AG04449 (cell line): ENCODE measurements at regions of chr13 and their contacts with region 1.

Region 1: GRCh38 chr13:60448907-60449510 is 52.0 kb downstream of the TDRD3 start:
- DNase-seq: peak; percentile 12
- H3K4me3 ChIP-seq: no peak overlapping the region
- CTCF ChIP-seq: peak; percentile 63

Region 2: GRCh38 chr13:60463787-60464186 is 14.8 kb after region 1 on chr13:
- CTCF ChIA-PET with region 1: interaction called, 26 read pairs
- POLR2A ChIA-PET with region 1: no interaction called
- DNase-seq: no peak
- H3K4me3 ChIP-seq: no peak overlapping the region
- CTCF ChIP-seq: no peak

Region 3: DNA sequence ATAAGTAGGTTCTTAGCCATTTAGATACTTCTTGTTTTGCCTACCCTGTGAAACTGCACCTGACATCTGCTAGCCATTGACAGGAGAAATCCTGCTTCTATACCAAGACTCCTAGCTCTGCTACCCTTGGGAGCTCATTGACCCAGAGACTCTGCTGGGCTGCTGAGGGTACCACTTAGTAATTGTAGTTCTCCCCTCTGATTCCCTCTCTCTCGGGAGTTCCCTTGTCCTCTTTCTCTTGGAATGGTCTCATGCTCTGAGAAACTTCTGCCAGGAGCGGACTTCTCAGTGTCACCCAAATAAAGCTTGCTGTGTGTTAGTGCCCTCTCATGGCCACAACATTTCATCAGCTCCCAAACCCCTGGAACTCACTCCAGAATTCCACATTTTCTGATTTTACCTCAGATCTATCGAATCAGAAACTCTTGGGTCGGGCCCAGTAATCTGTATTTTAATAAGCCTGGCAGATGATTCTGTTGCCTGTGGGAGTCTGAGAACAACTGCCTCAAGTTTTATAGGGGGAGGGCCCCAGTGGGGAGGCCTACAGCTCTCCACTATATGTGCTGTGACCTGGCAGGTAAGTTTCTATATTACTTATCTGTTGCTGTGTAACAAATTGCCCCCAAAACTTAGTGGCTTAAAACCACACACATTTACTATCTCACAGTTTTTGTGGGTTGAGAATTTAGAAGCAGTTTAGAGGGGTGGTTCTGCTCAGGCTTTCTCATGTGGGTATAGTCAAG is 169.2 kb after region 1 on chr13:
- CTCF ChIA-PET with region 1: interaction called, 50 read pairs
- POLR2A ChIA-PET with region 1: no interaction called
- DNase-seq: no peak
- H3K4me3 ChIP-seq: no peak overlapping the region
- CTCF ChIP-seq: peak; percentile 37

Region 4: GRCh38 chr13:61410669-61411297 is 961.8 kb after region 1 on chr13:
- CTCF ChIA-PET with region 1: interaction called, 18 read pairs
- POLR2A ChIA-PET with region 1: no interaction called
- DNase-seq: no peak
- H3K4me3 ChIP-seq: no peak overlapping the region
- CTCF ChIP-seq: no peak